ENCODE measurements at regions of chr3 and their contacts with region 1.

Region 1: DNA sequence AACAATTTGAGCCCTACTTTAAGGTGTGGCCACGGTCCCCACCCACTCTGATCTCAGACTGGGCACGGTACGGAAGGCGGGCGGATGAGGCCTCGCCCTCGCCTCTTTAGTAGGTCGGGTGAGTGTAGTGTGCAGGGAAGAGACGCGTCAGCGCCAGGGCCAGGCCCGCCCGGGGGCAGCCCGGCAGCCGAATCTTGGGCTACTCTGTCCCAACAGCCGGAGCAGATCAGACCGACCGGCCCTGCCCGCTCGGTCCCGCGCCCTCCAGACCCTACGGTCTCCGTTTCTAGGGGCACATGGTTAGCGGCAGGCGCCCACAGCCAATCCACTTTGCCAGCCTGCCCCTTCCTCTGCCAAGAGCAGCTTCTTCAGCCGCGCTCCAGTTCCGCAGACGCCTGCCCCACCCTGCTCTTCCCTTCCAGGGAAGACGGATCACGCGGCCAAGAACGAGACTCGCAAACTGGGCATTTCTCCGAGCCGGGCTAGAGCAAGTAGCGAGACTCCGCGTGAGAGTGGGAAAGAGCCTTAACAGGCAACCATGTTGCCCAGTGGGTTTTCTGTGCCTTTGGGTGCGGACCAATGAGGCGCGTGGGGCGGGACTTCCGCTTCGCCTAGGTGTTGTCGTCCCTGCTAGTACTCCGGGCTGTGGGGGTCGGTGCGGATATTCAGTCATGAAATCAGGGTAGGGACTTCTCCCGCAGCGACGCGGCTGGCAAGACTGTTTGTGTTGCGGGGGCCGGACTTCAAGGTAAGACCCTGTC is at the start of gene RNF13:
- DNase-seq: peak; percentile 86
- H3K4me3 ChIP-seq: peak within 1 kb of the TSS; percentile 86
- H3K27ac ChIP-seq: peak within 1 kb of the TSS; percentile 97
- H3K27me3 ChIP-seq: no peaks in the 10 kb centered on the region
- CTCF ChIP-seq: no peak
- polyA plus RNA-seq, gene RNF13: 31.4 and 46.3 TPM in 2 replicates

Region 2: GRCh38 chr3:149512209-149512782 is 300.5 kb before region 1 on chr3:
- CTCF ChIA-PET with region 1: interaction called, 15 read pairs
- POLR2A ChIA-PET with region 1: no interaction called
- DNase-seq: no peak
- H3K4me3 ChIP-seq: no peak overlapping the region
- H3K27ac ChIP-seq: no peak overlapping the region
- H3K27me3 ChIP-seq: no peaks in the 10 kb centered on the region
- CTCF ChIP-seq: peak; percentile 79

Region 3: DNA sequence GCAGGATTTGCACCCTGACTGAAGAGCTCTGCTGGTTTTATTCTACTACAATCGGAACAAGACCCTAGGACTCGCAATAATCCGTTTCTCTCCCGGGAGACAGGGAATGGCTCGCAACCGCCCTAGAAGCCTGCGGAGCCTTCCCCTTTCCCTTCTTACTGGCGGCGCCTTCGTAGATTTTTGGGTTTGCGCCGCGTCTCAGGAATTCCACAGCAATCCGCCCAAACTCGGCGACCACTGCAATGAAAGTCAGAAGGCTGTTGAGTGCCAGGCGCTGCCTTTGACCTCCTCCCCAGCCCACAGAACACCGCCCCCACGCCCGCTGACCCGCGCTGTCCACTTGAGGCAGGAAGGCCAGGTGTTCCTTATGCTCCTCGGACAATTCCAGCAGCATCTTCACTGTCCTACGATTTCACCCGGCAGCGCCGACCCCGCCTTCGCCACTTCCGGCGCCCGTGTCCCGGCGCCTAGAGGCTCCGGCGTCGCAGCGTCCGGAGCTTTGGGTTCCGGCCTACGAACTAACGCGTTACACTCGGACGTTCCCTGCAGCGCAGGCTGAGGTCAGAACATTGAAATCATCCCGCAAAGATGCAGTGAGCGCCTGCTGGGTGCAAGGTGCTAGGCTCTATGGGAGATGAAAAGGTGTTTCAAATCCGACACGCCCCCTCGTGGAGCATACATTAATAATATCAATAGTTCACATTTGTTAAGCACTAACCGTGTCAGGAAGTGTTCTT is 60.6 kb before region 1 on chr3 and contains the start of gene COMMD2:
- CTCF ChIA-PET with region 1: interaction called, 31 read pairs
- POLR2A ChIA-PET with region 1: no interaction called
- DNase-seq: peak; percentile 52
- H3K4me3 ChIP-seq: peak within 1 kb of the TSS; percentile 93
- H3K27ac ChIP-seq: peak within 1 kb of the TSS; percentile 58
- H3K27me3 ChIP-seq: peaks cover 4% of the 10 kb centered on the region
- CTCF ChIP-seq: peak; percentile 27
- polyA plus RNA-seq, gene COMMD2: 43.5 and 56.0 TPM in 2 replicates

Region 4: DNA sequence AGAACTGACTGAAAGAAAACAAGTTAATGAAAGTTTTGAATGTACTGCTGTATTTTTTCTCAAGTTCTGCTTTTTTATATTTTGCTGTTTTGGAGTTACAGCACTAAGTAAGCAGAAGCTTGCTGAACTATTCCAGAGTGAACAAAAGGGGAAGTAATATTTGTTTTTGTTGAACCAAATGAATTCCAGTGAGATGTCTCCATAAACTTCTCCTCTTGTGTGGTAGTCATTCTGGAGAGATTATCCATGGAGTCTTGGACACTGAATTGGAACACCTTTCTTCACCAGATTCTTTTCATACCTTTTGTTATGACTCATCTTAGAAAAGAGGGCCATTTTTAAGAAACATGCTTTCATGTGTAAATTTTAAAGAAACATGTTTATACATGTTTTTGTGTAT is 29.2 kb before region 1 on chr3:
- CTCF ChIA-PET with region 1: interaction called, 38 read pairs
- POLR2A ChIA-PET with region 1: no interaction called
- DNase-seq: peak; percentile 72
- H3K4me3 ChIP-seq: no peak overlapping the region
- H3K27ac ChIP-seq: no peak overlapping the region
- H3K27me3 ChIP-seq: no peaks in the 10 kb centered on the region
- CTCF ChIP-seq: no peak

Region 5: GRCh38 chr3:149860881-149861280 is 48.1 kb after region 1 on chr3:
- CTCF ChIA-PET with region 1: interaction called, 10 read pairs
- POLR2A ChIA-PET with region 1: no interaction called
- DNase-seq: no peak
- H3K4me3 ChIP-seq: no peak overlapping the region
- H3K27ac ChIP-seq: no peak overlapping the region
- H3K27me3 ChIP-seq: no peaks in the 10 kb centered on the region
- CTCF ChIP-seq: no peak

Region 6: DNA sequence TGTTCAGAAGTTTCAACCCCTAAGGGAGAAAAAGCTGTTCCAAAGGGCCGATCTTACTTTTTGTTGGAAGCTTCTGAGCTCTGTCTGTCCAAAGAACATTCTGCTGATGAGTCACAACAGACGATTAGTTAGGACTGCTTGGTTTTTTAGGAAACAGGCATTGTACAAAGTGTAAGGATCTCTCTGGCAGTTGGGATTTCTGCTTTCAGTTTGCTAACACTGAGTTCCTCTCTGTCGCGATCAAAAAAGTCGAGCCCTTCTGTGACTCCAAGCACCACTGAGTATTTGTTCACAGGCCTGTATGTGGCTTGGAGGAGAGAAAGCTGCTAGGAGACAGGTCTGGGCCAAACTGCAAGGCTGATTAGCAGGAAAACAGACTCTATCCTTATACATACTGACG is 249.7 kb after region 1 on chr3:
- CTCF ChIA-PET with region 1: no interaction called
- POLR2A ChIA-PET with region 1: no interaction called
- DNase-seq: no peak
- H3K4me3 ChIP-seq: peak overlapping the region; percentile 36
- H3K27ac ChIP-seq: peak overlapping the region; percentile 75
- H3K27me3 ChIP-seq: no peaks in the 10 kb centered on the region
- CTCF ChIP-seq: no peak